Activated CD4-positive, alpha-beta T cell treated with anti-CD3 and anti-CD28 coated beads for 36 hours (primary cell): ENCODE measurements at regions of chr10 and their contacts with region 1.

Region 1: GRCh38 chr10:22003079-22003913 is at the start of gene DNAJC1:
- DNase-seq: peak; percentile 99
- ATAC-seq: peak; percentile 93
- H3K4me3 Mint-ChIP-seq: peak within 1 kb of the TSS; percentile 94
- H3K27ac Mint-ChIP-seq: peak within 1 kb of the TSS; percentile 95
- H3K4me1 Mint-ChIP-seq: peaks cover 29% of the 10 kb centered on the region
- H3K27me3 Mint-ChIP-seq: no peaks in the 10 kb centered on the region
- total RNA-seq, gene DNAJC1: 20.6 to 28.1 TPM

Region 2: DNA sequence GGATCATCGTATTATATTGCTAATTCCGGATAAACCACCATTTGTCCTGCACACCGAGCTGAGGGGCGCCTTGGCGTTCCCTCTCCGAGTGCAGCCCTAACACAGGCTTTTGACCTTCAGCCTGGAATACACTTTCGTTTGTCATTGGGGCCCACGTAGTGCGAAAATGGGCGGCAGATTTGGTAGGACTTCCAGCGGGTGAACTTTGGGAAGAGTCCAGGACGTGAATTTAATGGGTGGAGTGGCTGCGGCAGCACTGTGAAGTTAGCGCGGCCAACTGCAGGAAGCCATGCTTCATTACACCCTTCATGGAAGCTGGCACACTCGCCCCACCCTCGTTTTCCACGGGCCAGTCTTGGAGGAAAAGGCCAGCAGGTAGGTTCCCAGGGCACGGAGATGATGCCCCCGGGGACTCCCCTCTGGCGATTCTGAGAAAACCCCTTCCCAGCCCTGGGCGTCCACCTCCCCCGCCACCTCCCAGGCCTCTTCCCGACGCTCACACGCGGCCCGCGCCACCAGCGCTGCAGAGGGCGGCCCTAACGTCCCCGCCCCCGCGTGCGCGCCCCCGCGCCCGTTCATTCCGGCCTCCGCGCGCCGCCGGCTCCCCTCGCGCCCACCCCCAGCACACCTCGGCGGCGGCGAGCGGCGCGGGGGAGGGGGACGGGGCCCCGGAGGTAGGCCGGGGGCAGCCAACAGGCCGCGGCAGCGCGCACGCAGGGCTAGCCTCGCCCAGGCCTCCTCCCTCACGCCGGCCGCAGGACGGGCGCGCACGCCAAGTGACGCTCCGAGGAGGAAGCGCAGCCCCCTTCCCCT is 469.6 kb before region 1 on chr10 and contains the start of gene MLLT10:
- CTCF ChIA-PET with region 1: no interaction called
- POLR2A ChIA-PET with region 1: no interaction called
- intact Hi-C with region 1: loop called in 1 of 2 experiments (anchors 2 kb)
- DNase-seq: peak; percentile 95
- ATAC-seq: peak; percentile 87
- H3K4me3 Mint-ChIP-seq: peak within 1 kb of the TSS; percentile 95
- H3K27ac Mint-ChIP-seq: peak within 1 kb of the TSS; percentile 98
- H3K4me1 Mint-ChIP-seq: peaks cover 18% of the 10 kb centered on the region
- H3K27me3 Mint-ChIP-seq: no peaks in the 10 kb centered on the region
- total RNA-seq, gene MLLT10: 33.8 to 34.1 TPM

Region 3: DNA sequence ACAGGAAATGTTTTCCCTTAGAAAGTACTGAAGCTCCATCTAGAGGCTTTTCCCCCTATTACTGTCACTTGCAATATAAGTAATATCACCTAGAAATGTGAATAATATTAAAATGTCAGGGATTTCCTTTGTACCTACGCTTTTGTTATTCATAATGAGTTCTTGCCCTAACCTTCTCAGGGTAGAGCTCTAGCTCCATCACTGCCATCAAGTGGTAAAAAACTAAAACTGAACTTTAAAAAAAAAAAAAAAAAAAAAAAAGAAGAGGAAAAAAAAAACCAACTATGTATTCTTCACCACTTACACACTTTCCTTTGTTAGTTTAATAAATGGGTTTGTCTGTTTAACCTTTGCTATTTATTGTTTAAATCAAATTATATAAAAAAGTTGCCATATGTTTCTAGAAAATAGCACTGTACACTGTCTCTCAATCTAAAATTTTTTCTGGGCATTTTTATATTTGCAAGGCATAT is 49.7 kb before region 1 on chr10:
- CTCF ChIA-PET with region 1: no interaction called
- POLR2A ChIA-PET with region 1: no interaction called
- intact Hi-C with region 1: no loop called
- DNase-seq: no peak
- ATAC-seq: peak; percentile 98
- H3K4me3 Mint-ChIP-seq: no peak overlapping the region
- H3K27ac Mint-ChIP-seq: no peak overlapping the region
- H3K4me1 Mint-ChIP-seq: peaks cover 7% of the 10 kb centered on the region
- H3K27me3 Mint-ChIP-seq: no peaks in the 10 kb centered on the region

Region 4: GRCh38 chr10:22251751-22252223 is 248.5 kb after region 1 on chr10:
- CTCF ChIA-PET with region 1: interaction called, 3 read pairs
- POLR2A ChIA-PET with region 1: no interaction called
- intact Hi-C with region 1: loop called (anchors 1 to 2 kb)
- DNase-seq: peak; percentile 83
- ATAC-seq: peak; percentile 42
- H3K4me3 Mint-ChIP-seq: peak overlapping the region; percentile 93
- H3K27ac Mint-ChIP-seq: peak overlapping the region; percentile 100
- H3K4me1 Mint-ChIP-seq: peaks cover 35% of the 10 kb centered on the region
- H3K27me3 Mint-ChIP-seq: peaks cover 5% of the 10 kb centered on the region

Region 5: DNA sequence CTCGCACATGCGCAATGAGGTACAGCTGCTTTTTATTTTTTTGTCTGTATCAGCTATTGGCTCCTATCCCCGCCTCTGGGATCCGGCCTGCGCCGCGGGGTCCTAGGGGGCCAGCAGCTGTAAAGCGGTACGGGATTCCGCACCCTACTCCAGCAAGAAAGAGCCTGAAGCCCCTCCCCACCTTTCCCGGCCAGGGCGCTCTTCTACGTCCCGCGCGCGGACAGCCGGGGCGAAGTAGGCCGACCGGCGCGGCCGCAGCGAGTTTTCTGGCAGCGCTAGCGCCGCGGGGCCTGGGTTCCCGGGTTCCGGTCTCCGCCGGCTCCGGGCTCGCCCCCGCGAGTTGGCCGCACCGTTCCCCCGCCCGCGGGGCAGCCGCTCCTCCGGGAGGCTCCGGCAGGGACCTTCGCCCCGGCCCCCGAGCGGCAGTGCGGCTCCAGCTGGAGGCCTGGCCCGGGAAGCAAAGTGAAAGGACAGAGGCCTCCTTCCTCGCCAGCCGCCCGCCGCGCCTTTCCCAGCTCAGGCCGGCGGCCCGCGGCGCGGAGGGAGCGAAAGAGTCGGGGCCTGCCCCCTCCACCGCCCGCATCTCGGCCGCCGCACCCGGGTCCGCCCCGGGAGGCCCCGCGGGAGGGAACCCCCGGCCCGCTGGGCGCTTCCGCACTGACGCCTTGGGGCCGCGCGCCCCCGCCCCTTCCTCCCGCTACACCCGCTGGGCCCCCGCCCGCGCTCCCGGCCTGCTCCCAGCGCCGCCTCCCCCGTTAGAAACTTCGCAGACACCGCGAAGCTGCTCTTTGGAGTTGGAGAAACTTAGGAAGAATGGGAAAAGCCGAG is 337.3 kb after region 1 on chr10:
- CTCF ChIA-PET with region 1: no interaction called
- POLR2A ChIA-PET with region 1: interaction called, 3 read pairs
- intact Hi-C with region 1: loop called (anchors 1 to 5 kb)
- DNase-seq: peak; percentile 72
- ATAC-seq: peak; percentile 48
- H3K4me3 Mint-ChIP-seq: peak overlapping the region; percentile 78
- H3K27ac Mint-ChIP-seq: peak overlapping the region; percentile 89
- H3K4me1 Mint-ChIP-seq: peaks cover 34% of the 10 kb centered on the region
- H3K27me3 Mint-ChIP-seq: peaks cover 58% of the 10 kb centered on the region

Region 6: DNA sequence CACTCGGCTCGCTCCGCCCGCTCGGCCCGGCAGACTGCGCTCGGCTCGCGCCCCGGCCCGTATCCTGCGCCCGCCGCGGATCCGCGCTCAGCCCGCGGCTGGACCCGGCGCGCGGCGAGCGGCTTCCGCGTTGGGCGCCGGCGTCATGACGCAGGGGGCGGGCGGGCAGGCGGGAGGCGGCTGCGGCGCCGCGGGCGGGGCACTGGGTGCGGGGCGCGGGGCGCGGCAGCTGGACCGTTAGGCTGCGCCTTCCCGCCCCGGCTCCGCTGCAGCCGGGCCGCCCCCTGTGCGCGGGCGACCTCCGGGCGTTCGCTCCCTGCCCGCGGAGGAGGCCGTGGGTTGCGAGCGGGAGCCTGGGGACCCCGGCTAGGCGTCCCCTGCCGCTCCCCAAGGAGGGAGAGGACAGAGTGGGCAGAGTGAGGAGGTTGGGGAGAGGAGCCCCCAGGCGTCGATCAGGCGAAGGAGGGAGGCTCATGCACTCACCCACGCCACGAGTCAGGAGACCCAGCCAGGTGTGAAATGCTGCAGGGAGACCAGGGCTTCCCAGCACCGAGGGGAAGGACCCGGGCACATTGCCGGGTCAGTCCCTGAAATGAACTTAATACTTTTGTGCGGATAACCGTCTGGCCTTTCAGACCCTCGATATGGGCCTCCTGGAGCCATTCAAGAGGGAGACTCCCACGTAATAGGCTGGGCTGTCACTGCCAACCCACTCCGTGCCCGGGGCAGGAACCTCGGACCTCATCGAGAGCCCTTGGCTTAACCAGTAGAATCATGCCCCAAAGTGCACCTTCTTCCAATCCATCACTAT is 711.4 kb after region 1 on chr10 and contains the start of gene PIP4K2A:
- CTCF ChIA-PET with region 1: no interaction called
- POLR2A ChIA-PET with region 1: no interaction called
- intact Hi-C with region 1: loop called (anchors 10 kb)
- DNase-seq: peak; percentile 86
- ATAC-seq: peak; percentile 86
- H3K4me3 Mint-ChIP-seq: peak within 1 kb of the TSS; percentile 86
- H3K27ac Mint-ChIP-seq: peak within 1 kb of the TSS; percentile 88
- H3K4me1 Mint-ChIP-seq: peaks cover 29% of the 10 kb centered on the region
- H3K27me3 Mint-ChIP-seq: no peaks in the 10 kb centered on the region
- total RNA-seq, gene PIP4K2A: 105 to 108 TPM

Region 7: GRCh38 chr10:23095404-23095965 is 1092.2 kb after region 1 on chr10 and contains the start of gene MSRB2:
- CTCF ChIA-PET with region 1: no interaction called
- POLR2A ChIA-PET with region 1: no interaction called
- intact Hi-C with region 1: loop called in 1 of 2 experiments (anchors 5 kb)
- DNase-seq: peak; percentile 84
- ATAC-seq: peak; percentile 58
- H3K4me3 Mint-ChIP-seq: peak within 1 kb of the TSS; percentile 95
- H3K27ac Mint-ChIP-seq: peak within 1 kb of the TSS; percentile 92
- H3K4me1 Mint-ChIP-seq: peaks cover 39% of the 10 kb centered on the region
- H3K27me3 Mint-ChIP-seq: no peaks in the 10 kb centered on the region
- total RNA-seq, gene MSRB2: 8.2 to 9.0 TPM